ENCODE measurements at regions of chr3 and their contacts with region 1.

Region 1: DNA sequence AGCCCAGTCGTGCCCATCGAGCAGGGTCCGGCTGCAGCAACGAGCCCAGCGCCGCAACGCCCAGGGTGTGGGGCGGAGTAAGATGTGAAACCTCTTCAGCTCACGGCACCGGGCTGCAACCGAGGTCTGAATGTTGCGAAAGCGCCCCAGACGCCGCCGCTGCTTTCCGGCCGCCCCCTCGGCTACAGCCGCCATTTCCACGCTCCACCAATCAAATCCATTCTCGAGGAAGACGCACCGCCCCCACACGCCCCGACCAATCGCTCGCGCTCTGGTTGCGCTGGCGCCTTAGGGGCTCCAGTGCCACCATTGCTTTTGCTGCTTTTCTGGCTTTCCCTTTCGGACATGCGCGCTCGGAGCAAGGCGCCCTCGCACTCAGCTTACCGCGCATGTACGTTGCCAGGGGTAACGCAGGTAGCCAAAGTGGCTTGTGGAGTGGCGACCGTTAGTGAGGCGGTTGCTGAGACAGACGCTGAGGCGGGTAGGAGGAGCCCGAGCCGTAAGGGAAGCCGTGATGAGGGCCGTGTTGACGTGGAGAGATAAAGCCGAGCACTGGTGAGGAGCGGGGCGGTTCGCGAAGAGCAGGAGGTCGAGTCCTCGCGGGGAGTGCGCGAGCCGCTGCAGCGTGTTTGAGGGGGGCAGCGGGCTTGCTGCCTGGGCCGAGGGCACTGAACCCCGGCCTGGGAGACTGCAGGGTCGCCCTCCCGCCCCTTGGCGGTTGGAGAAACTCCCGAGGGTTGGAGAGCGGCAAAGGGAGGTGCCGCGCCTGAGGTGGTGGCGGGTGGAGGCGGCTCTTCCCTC is at the starts of genes IFT122 and MBD4:
- DNase-seq: peak; percentile 98
- ATAC-seq: peak; percentile 94 to 96
- total RNA-seq, gene IFT122: 20.2 to 43.4 TPM
- total RNA-seq, gene MBD4: 18.7 to 48.9 TPM

Region 2: GRCh38 chr3:129383292-129383860 is 56.6 kb before region 1 on chr3:
- intact Hi-C with region 1: loop called in 1 of 2 experiments (anchors 10 kb)
- DNase-seq: peak; percentile 62
- ATAC-seq: peak; percentile 87 to 94

Region 3: GRCh38 chr3:129490242-129491045 is 50.4 kb after region 1 on chr3:
- intact Hi-C with region 1: no loop called
- DNase-seq: peak; percentile 83
- ATAC-seq: peak; percentile 90